WTC11 (cell line): ENCODE measurements at regions of chr19 and their contacts with region 1.

Region 1: DNA sequence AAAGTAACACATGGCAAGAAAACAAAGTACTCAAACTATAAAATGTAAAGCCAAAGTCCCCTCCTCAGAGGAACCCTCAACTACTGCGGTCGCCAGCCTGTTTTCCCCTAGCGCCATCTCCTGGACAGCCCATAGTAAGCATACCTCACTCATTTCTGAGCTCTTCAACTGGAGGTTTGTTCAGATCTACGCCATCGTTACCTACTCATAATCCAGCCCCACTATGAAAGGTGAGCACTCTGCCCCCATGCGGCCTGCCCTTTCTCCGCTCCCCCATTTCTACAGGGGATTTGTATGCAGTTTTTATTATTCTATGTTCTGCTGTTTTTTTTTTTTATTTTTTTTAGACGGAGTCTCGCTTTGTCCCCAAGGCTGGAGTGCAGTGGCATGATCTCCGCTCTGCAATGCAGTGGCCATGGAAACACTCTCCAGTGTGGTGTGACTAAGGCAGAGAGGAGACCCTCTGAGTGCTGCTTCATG is 26.2 kb downstream of the OPA3 start:
- DNase-seq: peak; percentile 78
- ATAC-seq: peak; percentile 89
- H3K4me3 Mint-ChIP-seq: no peak overlapping the region
- H3K27ac Mint-ChIP-seq: no peak overlapping the region
- H3K4me1 Mint-ChIP-seq: peaks cover 12% of the 10 kb centered on the region; the same call in 1 of the 2 replicates
- H3K27me3 Mint-ChIP-seq: no peaks in the 10 kb centered on the region
- CTCF ChIP-seq: no peak

Region 2: GRCh38 chr19:45446320-45446763 is 112.1 kb before region 1 on chr19:
- CTCF ChIA-PET with region 1: no interaction called
- POLR2A ChIA-PET with region 1: no interaction called
- DNase-seq: no peak
- ATAC-seq: no peak
- H3K4me3 Mint-ChIP-seq: no peak overlapping the region
- H3K27ac Mint-ChIP-seq: no peak overlapping the region
- H3K4me1 Mint-ChIP-seq: peaks cover 33% of the 10 kb centered on the region
- H3K27me3 Mint-ChIP-seq: peaks cover 63% of the 10 kb centered on the region
- CTCF ChIP-seq: no peak

Region 3: DNA sequence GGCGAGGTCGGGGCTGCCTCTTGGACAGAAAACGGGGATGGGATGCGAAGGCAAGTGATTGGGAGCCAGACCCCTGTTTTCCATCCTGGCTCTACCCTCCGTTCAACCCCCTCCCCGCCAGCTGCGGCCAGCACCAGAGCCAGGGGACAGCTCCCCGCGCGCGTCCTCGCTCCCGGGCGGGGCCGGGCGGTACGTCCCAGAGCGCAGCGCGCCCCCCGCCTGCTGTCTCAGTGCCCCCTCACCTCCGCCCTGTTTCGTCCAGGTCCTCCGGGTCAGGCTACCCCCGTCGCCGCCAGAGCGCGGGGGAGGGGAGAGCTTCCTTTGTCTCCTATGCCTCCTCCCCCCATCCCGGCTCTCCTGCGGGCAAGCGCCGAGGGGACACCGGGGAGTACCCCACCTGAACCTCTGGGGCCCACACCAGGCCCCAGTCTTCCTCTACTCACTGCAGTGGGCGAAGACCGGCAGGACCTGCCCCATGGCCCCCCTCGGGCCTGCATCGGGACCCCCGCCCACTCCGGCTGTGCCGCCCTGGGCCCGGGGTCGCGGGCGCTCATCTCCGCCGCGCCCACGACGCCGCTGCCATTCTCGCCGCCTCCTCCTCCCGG is 62.0 kb before region 1 on chr19:
- CTCF ChIA-PET with region 1: interaction called, 14 read pairs
- POLR2A ChIA-PET with region 1: no interaction called
- DNase-seq: peak; percentile 84
- ATAC-seq: peak; percentile 1
- H3K4me3 Mint-ChIP-seq: peak overlapping the region; percentile 63
- H3K27ac Mint-ChIP-seq: no peak overlapping the region
- H3K4me1 Mint-ChIP-seq: peaks cover 43% of the 10 kb centered on the region
- H3K27me3 Mint-ChIP-seq: peaks cover 39% of the 10 kb centered on the region
- CTCF ChIP-seq: no peak

Region 4: GRCh38 chr19:45547976-45548609 is 10.3 kb before region 1 on chr19:
- CTCF ChIA-PET with region 1: interaction called, 34 read pairs
- POLR2A ChIA-PET with region 1: no interaction called
- DNase-seq: no peak
- ATAC-seq: peak; percentile 41; the same call in 1 of the 2 replicates
- H3K4me3 Mint-ChIP-seq: no peak overlapping the region
- H3K27ac Mint-ChIP-seq: peak overlapping the region; percentile 45; the same call in 1 of the 2 replicates
- H3K4me1 Mint-ChIP-seq: peaks cover 20% of the 10 kb centered on the region
- H3K27me3 Mint-ChIP-seq: no peaks in the 10 kb centered on the region
- CTCF ChIP-seq: no peak

Region 5: GRCh38 chr19:45584332-45585157 is 26.1 kb after region 1 on chr19 and contains the start of gene OPA3:
- CTCF ChIA-PET with region 1: interaction called, 16 read pairs
- POLR2A ChIA-PET with region 1: no interaction called
- DNase-seq: peak; percentile 98
- ATAC-seq: peak; percentile 96
- H3K4me3 Mint-ChIP-seq: peak within 1 kb of the TSS; percentile 91
- H3K27ac Mint-ChIP-seq: peak within 1 kb of the TSS; percentile 97
- H3K4me1 Mint-ChIP-seq: peaks cover 17% of the 10 kb centered on the region
- H3K27me3 Mint-ChIP-seq: peaks cover 11% of the 10 kb centered on the region
- CTCF ChIP-seq: no peak
- total RNA-seq, gene OPA3: 10.1 to 16.1 TPM (median 14.9 TPM) in 3 replicates

Region 6: GRCh38 chr19:45615795-45616708 is 57.6 kb after region 1 on chr19:
- CTCF ChIA-PET with region 1: interaction called, 16 read pairs
- POLR2A ChIA-PET with region 1: no interaction called
- DNase-seq: peak; percentile 99
- ATAC-seq: peak; percentile 96
- H3K4me3 Mint-ChIP-seq: peak overlapping the region; percentile 86
- H3K27ac Mint-ChIP-seq: peak overlapping the region; percentile 99
- H3K4me1 Mint-ChIP-seq: 0 out of 2 replicates have a peak, but pooled peaks cover 7% of the 10 kb centered on the region
- H3K27me3 Mint-ChIP-seq: no peaks in the 10 kb centered on the region
- CTCF ChIP-seq: no peak

Region 7: DNA sequence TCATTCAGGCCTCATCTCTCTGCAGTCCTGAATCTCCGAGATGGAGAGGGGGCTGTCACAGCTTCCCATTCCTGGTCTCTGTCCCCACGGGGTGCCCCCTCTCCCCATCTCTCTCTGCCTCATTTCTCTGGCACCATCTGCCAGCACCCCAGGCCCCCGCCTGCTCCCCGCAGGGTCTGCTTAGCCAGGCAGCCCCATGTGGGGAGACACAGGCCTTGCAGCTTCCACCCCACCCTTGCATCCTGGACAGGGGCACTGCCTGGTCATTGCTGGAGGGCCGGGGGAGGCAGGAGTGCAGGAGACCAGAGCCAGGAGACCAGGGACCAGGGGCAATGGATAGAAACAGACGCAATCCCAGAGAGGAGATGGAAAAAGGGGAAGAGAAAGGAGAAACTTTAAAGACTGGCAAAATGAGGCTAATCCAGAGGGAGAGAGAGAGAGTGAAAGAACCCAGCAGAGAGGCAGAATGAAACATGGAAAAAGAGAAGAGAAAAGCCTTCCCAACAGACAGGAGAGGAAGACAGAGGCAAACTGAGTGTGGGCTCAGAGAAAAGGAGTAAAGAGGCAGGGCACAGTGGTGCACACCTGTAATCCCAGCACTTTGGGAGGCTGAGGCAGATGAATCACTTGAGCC is 100.8 kb after region 1 on chr19:
- CTCF ChIA-PET with region 1: no interaction called
- POLR2A ChIA-PET with region 1: no interaction called
- DNase-seq: no peak
- ATAC-seq: no peak
- H3K4me3 Mint-ChIP-seq: no peak overlapping the region
- H3K27ac Mint-ChIP-seq: peak overlapping the region; percentile 75; the same call in 1 of the 2 replicates
- H3K4me1 Mint-ChIP-seq: peaks cover 2% of the 10 kb centered on the region; the same call in 1 of the 2 replicates
- H3K27me3 Mint-ChIP-seq: peaks cover 29% of the 10 kb centered on the region
- CTCF ChIP-seq: no peak